GM10248 (cell line): ENCODE measurements at regions of chr18 and their contacts with region 1.

Region 1: DNA sequence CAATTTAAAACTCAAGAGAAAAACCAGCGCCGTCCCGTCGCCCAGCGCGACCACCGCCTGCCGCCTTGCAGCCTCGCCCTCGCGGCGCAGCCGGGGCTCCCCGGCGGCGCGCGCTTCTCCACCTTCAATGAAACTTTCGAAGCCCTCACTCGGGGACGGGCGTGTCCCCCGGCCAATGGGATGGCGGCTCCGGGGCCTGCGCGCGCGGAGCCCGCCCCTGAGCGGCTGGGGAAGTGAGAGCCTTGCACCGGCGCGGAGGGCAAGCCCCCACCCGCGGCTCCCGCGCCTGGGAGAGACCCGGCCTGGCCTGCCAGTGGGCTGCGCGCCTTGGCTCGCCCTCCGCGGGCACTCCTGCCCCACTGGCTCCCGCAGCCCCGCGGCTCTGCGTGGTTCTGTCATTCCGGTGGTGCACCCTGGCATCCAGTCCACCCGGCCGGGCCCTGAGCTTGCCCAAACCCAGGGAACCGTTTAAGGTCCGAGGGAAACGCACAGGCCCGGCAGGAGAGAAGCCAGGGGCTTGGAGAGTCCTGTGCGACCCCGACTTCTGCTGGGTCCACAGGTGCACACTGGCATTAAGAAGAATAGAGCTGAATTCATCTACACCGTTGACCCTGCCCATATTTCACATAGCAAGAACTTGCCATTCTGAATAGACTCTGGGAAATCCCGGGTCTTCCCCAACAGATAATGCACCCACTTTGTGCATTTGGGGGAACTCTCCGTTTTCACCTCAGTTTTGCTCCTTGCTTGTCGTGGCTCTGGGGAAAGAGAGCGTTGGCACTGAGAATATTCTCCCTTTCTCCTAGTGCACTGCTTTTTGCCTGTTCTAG is at the start of gene PIEZO2:
- DNase-seq: peak; percentile 92
- CTCF ChIP-seq: no peak

Region 2: DNA sequence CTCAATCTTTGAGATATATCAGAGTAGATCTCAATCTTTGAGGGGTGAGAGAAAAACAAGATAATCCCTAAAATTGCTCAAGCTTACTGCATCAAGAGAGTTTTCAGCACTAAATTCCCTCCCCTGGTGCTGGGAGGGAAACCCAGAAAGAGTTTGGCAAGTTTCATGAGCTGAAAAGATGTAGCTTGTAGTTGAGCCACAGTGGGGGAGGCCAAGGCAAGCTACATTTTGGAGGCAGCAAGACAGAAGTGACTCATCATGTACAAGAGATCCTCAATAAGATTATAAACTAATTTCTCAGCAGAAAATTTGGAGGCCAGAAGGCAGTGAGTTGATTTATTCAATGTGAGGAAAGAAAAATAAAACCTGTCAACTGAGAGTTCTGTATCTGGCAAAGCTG is 308.5 kb before region 1 on chr18:
- CTCF ChIA-PET with region 1: interaction called, 11 read pairs
- POLR2A ChIA-PET with region 1: no interaction called
- DNase-seq: no peak
- CTCF ChIP-seq: no peak

Region 3: GRCh38 chr18:11136241-11136640 is 13.4 kb before region 1 on chr18:
- CTCF ChIA-PET with region 1: interaction called, 10 read pairs
- POLR2A ChIA-PET with region 1: no interaction called
- DNase-seq: no peak
- CTCF ChIP-seq: no peak

Region 4: GRCh38 chr18:11163665-11164064 is 14.0 kb after region 1 on chr18:
- CTCF ChIA-PET with region 1: interaction called, 15 read pairs
- POLR2A ChIA-PET with region 1: no interaction called
- DNase-seq: peak; percentile 54
- CTCF ChIP-seq: peak; percentile 68